GM12878 (cell line): ENCODE measurements at regions of chr1 and their contacts with region 1.

Region 1: DNA sequence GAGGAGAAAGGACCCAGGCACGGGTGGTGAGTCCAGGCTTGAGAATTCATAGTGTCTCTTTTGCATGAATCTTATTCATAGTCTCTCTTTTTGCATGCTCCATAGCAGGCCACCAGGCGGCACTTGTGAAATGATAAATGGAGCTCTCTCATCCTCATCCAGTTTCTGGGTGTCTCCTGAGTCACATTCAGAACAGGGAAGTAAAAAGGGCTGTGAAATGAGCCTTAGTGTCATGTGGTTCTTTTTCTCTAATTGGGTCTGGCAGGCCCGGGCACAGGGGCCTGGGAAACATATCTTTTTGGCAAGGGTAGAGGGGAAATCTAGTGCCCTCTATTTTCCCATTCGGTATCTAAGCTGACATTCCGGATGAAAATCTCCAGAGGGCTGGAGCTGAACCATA is 19.1 kb upstream of the NCF2 start:
- DNase-seq: no peak
- ATAC-seq: peak; percentile 62
- H3K4me3 ChIP-seq: no peak overlapping the region
- H3K27ac ChIP-seq: peak overlapping the region; percentile 53
- H3K4me1 ChIP-seq: peaks cover 46% of the 10 kb centered on the region
- H3K27me3 ChIP-seq: no peaks in the 10 kb centered on the region
- CTCF ChIP-seq: peak; percentile 69 to 76 (median 72)
- EP300 ChIP-seq: peak in 1 of 2 experiments; percentile 57; a peak in 1 of 4 replicates
- POLR2A ChIP-seq: no peak
- RAD21 ChIP-seq: peak; percentile 70

Region 2: GRCh38 chr1:182430263-182431068 is 1178.8 kb before region 1 on chr1:
- CTCF ChIA-PET with region 1: no interaction called
- POLR2A ChIA-PET with region 1: interaction called, 10 read pairs
- RAD21 ChIA-PET with region 1: no interaction called
- SMC1A ChIA-PET with region 1: no interaction called
- in situ Hi-C with region 1: no loop called
- intact Hi-C with region 1: no loop called
- DNase-seq: peak; percentile 50
- ATAC-seq: peak; percentile 52
- H3K4me3 ChIP-seq: no peak overlapping the region
- H3K27ac ChIP-seq: peak overlapping the region; percentile 48
- H3K4me1 ChIP-seq: peaks cover 34% of the 10 kb centered on the region
- H3K27me3 ChIP-seq: no peaks in the 10 kb centered on the region
- CTCF ChIP-seq: no peak
- EP300 ChIP-seq: 0 out of 4 replicates have a peak, but pooled peaks of 1 of the 2 experiments have one; percentile 26
- POLR2A ChIP-seq: no peak
- RAD21 ChIP-seq: no peak

Region 3: DNA sequence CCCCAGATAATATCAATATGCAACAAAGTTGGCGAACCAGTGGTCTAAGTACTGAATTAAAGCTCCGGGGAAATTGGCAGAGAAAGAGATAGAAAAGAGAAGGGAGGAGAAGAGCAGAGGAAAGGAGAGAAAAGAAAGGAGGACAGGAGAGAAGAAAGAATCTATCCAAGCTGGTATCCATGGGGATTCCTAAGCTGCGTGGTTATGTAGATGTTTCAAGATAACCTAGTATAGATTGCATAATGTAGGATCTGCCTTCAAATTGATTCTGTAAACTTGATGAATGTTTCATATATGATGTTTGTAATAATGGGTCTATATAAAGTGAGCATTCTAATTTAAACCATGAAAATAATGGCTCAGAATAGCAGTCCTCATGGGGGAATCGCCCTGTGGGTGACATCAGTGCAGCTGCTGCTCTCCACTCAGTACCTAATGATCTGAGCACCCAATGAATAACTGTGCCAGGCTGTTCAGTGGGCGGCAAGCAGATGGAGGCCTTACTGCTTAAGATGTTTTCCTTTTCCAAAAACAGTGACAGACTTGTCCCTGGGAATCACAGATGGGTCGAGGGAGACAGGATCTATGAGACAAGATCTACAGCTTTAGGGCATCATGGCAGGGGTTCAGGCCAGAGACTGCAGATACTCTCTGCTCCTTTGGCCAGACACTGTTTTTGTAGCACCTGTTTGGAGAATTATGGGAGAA is 345.3 kb before region 1 on chr1:
- CTCF ChIA-PET with region 1: no interaction called
- POLR2A ChIA-PET with region 1: no interaction called
- RAD21 ChIA-PET with region 1: no interaction called
- SMC1A ChIA-PET with region 1: no interaction called
- in situ Hi-C with region 1: no loop called
- intact Hi-C with region 1: no loop called
- DNase-seq: no peak
- ATAC-seq: no peak
- H3K4me3 ChIP-seq: no peak overlapping the region
- H3K27ac ChIP-seq: no peak overlapping the region
- H3K4me1 ChIP-seq: no peaks in the 10 kb centered on the region
- H3K27me3 ChIP-seq: peaks cover 0 to 2% of the 10 kb centered on the region in 2 experiments; a peak in 1 of 4 replicates
- CTCF ChIP-seq: no peak
- EP300 ChIP-seq: no peak
- POLR2A ChIP-seq: no peak
- RAD21 ChIP-seq: no peak

Region 4: GRCh38 chr1:183580281-183580682 is 29.0 kb before region 1 on chr1:
- CTCF ChIA-PET with region 1: interaction called, 13 read pairs
- POLR2A ChIA-PET with region 1: interaction called, 6 read pairs
- RAD21 ChIA-PET with region 1: interaction called, 9 read pairs
- SMC1A ChIA-PET with region 1: interaction called, 363 read pairs
- in situ Hi-C with region 1: no loop called
- intact Hi-C with region 1: no loop called
- DNase-seq: no peak
- ATAC-seq: peak; percentile 63
- H3K4me3 ChIP-seq: no peak overlapping the region
- H3K27ac ChIP-seq: no peak overlapping the region
- H3K4me1 ChIP-seq: peaks cover 7% of the 10 kb centered on the region
- H3K27me3 ChIP-seq: no peaks in the 10 kb centered on the region
- CTCF ChIP-seq: peak; percentile 34; a peak in 4 of 6 replicates
- EP300 ChIP-seq: no peak
- POLR2A ChIP-seq: no peak
- RAD21 ChIP-seq: peak; percentile 32; the same call in 1 of the 2 replicates

Region 5: DNA sequence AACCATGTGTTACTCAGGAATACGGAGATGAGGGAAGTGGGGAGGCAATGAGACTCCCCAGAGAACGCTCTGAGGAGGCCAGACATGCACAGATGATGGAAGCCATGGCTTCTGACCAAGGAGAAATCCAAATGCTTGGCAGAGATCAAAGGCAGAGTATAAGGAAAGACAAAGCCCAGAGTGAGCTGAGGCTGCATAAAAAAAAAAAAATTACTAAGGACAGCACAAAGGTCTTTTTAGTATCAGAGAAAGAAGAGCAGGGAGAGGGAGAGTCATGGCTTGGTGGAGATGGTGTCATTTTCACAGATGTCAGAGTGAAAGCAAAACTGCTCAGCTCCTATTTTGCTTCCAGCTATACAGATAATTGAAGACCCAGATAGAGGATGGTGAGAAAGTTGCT is 10.9 kb before region 1 on chr1:
- CTCF ChIA-PET with region 1: interaction called, 152 read pairs
- POLR2A ChIA-PET with region 1: interaction called, 199 read pairs
- RAD21 ChIA-PET with region 1: interaction called, 188 read pairs
- SMC1A ChIA-PET with region 1: interaction called, 363 read pairs
- in situ Hi-C with region 1: no loop called
- intact Hi-C with region 1: no loop called
- DNase-seq: no peak
- ATAC-seq: peak; percentile 78
- H3K4me3 ChIP-seq: no peak overlapping the region
- H3K27ac ChIP-seq: peak overlapping the region; percentile 59
- H3K4me1 ChIP-seq: peaks cover 33% of the 10 kb centered on the region
- H3K27me3 ChIP-seq: no peaks in the 10 kb centered on the region
- CTCF ChIP-seq: no peak
- EP300 ChIP-seq: 0 out of 4 replicates have a peak, but pooled peaks of 1 of the 2 experiments have one; percentile 18
- POLR2A ChIP-seq: no peak
- RAD21 ChIP-seq: no peak

Region 6: GRCh38 chr1:183630748-183631147 is 21.4 kb after region 1 on chr1:
- CTCF ChIA-PET with region 1: interaction called, 20 read pairs
- POLR2A ChIA-PET with region 1: interaction called, 27 read pairs
- RAD21 ChIA-PET with region 1: interaction called, 17 read pairs
- SMC1A ChIA-PET with region 1: interaction called, 17 read pairs
- in situ Hi-C with region 1: no loop called
- intact Hi-C with region 1: loop called (anchors 1 kb)
- DNase-seq: no peak
- ATAC-seq: peak; percentile 10
- H3K4me3 ChIP-seq: peak overlapping the region; percentile 39; the same call in 1 of the 2 replicates
- H3K27ac ChIP-seq: no peak overlapping the region
- H3K4me1 ChIP-seq: no peaks in the 10 kb centered on the region; the same call in 1 of the 2 replicates
- H3K27me3 ChIP-seq: no peaks in the 10 kb centered on the region
- CTCF ChIP-seq: no peak
- EP300 ChIP-seq: no peak
- POLR2A ChIP-seq: no peak
- RAD21 ChIP-seq: no peak